T-cell (primary cell): ENCODE measurements at regions of chr3 and their contacts with region 1.

Region 1: DNA sequence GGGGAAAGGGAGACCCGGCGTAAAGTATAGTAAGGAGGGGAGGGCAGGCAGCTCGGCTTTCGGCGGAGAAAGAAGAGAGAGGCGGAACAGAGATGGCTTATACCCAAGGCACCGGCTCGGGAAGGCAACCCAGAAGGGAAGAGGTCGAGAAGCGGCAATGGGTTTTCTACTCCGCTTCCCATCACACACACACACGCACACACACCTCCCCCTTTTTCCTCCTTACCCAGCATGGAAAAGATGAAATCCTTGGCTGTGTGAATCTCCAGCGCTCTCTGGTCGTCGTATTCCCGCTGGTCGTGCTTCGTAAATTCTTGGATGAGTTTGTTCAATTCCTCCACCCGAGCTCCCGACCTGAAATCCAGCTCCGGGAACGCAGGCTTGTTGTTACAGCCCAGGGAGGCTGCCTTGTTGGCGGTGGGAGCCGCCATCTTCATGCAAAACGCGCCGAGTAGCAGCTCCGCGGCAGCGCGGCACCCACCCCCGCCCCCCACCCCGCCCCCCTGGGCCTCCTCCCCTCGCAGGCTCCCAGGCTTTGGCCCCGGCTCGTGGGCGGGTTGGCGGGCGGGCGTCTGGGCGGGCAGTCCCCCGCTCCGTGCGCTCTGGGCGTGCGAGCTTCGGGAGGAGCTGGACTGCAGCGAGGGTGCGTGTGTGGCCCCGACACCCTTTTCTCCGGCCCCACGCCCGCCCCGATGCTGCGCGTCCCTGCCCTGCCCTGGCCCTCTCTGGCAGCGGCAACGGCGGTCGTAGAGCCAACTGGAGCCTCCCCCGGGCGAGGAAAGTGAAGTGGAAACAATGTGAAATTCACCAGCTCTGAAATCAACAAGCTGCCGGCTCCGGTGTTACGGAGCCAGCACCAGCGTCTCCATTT is at the start of gene MB21D2:
- DNase-seq: peak in 30 of 35 experiments; percentile 4 to 64 (median 30)
- ATAC-seq: peak; percentile 76 to 80 (median 78)
- H3K4me3 ChIP-seq: peak within 1 kb of the TSS; percentile 61 to 83
- H3K4me3 Mint-ChIP-seq: peak within 1 kb of the TSS; percentile 82 to 98 (median 93)
- H3K27ac ChIP-seq: peak within 1 kb of the TSS; percentile 64
- H3K27ac Mint-ChIP-seq: peak within 1 kb of the TSS; percentile 89
- H3K4me1 ChIP-seq: peaks cover 0 to 19% of the 10 kb centered on the region in 2 experiments
- H3K4me1 Mint-ChIP-seq: peaks cover 23 to 44% (median 38%) of the 10 kb centered on the region in 3 donors
- H3K27me3 ChIP-seq: peaks cover 20 to 22% of the 10 kb centered on the region in 2 experiments
- H3K27me3 Mint-ChIP-seq: peaks cover 44 to 50% of the 10 kb centered on the region in 2 donors
- total RNA-seq, gene MB21D2: 4.1 to 7.6 (median 5.5) TPM

Region 2: GRCh38 chr3:192514081-192514753 is 403.4 kb before region 1 on chr3:
- CTCF ChIA-PET with region 1: no interaction called
- POLR2A ChIA-PET with region 1: no interaction called
- DNase-seq: no peak
- ATAC-seq: no peak
- H3K4me3 ChIP-seq: no peak overlapping the region
- H3K4me3 Mint-ChIP-seq: peak overlapping the region in 2 of 3 donors; percentile 25 to 42
- H3K27ac ChIP-seq: no peak overlapping the region
- H3K27ac Mint-ChIP-seq: no peak overlapping the region
- H3K4me1 ChIP-seq: no peaks in the 10 kb centered on the region
- H3K4me1 Mint-ChIP-seq: peaks cover 0 to 6% (median 5%) of the 10 kb centered on the region in 3 donors
- H3K27me3 ChIP-seq: peaks cover 0 to 19% of the 10 kb centered on the region in 2 experiments
- H3K27me3 Mint-ChIP-seq: peaks cover 42 to 46% of the 10 kb centered on the region in 2 donors

Region 3: GRCh38 chr3:192899540-192899982 is 18.1 kb before region 1 on chr3:
- CTCF ChIA-PET with region 1: interaction called in 1 of 2 experiments, 4 read pairs
- POLR2A ChIA-PET with region 1: interaction called, 4 to 14 read pairs
- DNase-seq: peak in 1 of 35 experiments; percentile 23
- ATAC-seq: no peak
- H3K4me3 ChIP-seq: no peak overlapping the region
- H3K4me3 Mint-ChIP-seq: peak overlapping the region in 1 of 3 donors; percentile 38
- H3K27ac ChIP-seq: peak overlapping the region; percentile 53
- H3K27ac Mint-ChIP-seq: peak overlapping the region; percentile 79 to 84
- H3K4me1 ChIP-seq: peaks cover 0 to 19% of the 10 kb centered on the region in 2 experiments
- H3K4me1 Mint-ChIP-seq: peaks cover 37 to 63% (median 38%) of the 10 kb centered on the region in 3 donors
- H3K27me3 ChIP-seq: no peaks in the 10 kb centered on the region
- H3K27me3 Mint-ChIP-seq: peaks cover 0 to 3% of the 10 kb centered on the region in 2 donors